Posterior vena cava (tissue), 2 donors: ENCODE measurements at regions of chr15 and their contacts with region 1.

Region 1: DNA sequence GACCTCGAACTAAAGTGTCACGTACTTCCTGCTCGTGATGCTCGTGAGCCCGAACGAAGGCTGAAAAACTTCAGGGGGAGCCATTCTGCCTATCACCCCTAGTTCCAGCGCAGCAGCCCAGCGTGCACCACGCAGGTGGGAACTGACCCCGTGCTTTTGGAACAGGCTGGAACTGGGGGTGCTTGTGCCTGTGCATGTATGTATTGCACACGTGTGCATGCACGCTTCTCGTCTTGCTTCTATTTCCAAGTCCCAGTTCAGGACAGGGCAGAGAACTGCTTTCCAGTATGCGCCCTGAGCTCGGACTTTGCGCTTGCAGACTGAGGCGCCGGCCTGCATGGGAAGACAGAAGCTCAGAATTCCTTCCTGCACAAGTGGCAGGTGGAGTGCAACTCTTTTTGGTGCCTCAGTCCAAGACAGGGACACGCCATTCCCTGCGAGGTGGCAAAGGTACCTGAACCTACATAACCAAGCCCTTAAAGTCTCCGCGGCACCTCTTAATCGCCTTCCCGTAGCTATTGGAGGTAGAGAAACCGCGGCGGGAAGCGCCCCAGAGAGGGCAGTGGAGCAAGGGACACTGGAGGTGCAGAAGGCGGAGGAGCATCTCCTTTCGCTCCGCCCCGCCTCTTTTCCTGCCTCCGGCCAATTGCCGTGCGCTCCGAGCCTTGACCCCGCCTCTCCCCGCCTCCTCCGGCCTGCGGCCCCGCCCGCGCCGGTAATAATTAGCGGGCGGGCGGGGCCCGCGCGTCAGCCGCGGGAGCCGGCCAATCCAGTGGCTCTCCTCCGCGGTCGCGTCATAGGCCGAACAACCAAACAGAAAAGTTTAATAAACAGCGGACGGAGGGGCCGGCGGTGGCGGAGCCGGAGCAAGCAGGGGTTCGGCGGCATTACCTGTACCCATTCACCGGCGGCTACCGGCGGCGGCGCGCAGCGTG is at the start of gene ZFAND6:
- DNase-seq: peak; percentile 98
- total RNA-seq, gene ZFAND6: 45.4 to 62.9 TPM

Region 2: DNA sequence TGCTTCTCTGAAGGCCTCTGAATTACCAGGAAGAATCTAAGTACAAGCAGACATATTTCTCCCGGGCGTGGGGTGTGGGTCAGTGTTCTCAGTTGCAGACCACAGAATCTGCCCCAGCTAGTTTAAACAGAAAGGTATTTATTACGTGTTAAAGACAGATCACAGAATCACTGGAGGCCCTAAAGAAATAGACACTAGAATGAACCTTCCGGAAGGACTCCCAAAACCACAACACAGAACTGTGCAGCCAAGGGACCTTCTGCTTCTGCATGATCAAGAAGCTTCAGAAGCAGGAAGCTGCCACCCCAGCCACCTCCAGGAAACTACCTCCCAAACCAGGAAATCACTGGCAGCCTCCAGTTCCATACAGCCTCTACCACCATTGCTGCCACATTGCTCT is 32.4 kb before region 1 on chr15:
- intact Hi-C with region 1: no loop called
- DNase-seq: no peak

Region 3: GRCh38 chr15:80152180-80152845 is 93.2 kb after region 1 on chr15:
- intact Hi-C with region 1: loop called in 1 of 2 experiments (anchors 10 kb)
- DNase-seq: peak; percentile 98